ENCODE measurements at regions of chr17 and their contacts with region 1.

Region 1: DNA sequence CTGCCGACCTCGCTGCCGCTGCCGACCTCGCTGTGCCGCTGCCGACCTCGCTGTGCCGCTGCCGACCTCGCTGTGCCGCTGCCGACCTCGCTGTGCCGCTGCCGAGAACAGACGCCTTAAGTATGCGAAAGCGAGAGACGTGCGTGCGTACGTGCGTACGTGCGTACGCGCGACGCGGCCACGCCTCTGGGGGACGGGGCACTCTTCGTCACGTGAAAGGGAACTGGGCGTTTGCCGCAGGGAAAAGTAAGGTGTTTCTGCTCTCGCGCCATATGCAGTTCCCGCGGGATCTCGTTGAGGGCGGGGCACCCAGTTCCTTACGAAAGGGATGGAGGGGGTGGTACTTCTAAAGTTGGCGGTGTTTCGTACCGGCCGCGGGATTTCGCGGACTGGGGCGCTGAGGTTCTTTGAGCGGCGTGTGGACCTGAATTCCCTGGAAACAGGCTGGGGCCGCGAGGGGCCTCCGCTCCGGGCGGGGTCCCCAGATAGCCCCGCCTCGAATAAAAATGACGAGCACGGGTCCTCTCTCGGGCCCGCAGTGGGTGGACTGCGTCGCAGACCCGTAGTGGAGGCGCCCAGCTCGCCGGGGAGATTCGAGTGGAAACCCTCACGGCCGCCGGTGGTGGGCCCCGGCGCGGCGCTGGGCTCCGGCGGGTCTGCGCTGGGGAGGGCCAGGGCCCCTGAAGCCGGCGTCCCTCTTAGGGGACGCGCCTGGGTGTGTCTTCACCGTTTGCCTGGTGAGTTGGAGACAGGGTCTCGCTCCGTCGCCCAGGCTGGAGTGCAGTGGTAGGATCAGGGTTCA is at the start of gene EIF4A3:
- DNase-seq: peak; percentile 100
- H3K4me3 ChIP-seq: peak within 1 kb of the TSS; percentile 61 to 81 (median 68)
- H3K27ac ChIP-seq: peak within 1 kb of the TSS; percentile 67
- H3K4me1 ChIP-seq: peaks cover 17% of the 10 kb centered on the region
- H3K27me3 ChIP-seq: no peaks in the 10 kb centered on the region
- CTCF ChIP-seq: no peak
- POLR2A ChIP-seq: peak; percentile 75
- total RNA-seq, gene EIF4A3: 90.4 and 93.8 TPM in 2 replicates

Region 2: GRCh38 chr17:80035943-80036714 is 111.1 kb before region 1 on chr17 and contains the start of gene CCDC40:
- CTCF ChIA-PET with region 1: no interaction called
- POLR2A ChIA-PET with region 1: no interaction called
- dilution Hi-C with region 1: no loop called
- intact Hi-C with region 1: loop called (anchors 1 kb)
- DNase-seq: peak; percentile 72
- H3K4me3 ChIP-seq: peak within 1 kb of the TSS; percentile 5 to 86 (median 76)
- H3K27ac ChIP-seq: peak within 1 kb of the TSS; percentile 71
- H3K4me1 ChIP-seq: peaks cover 7% of the 10 kb centered on the region
- H3K27me3 ChIP-seq: no peaks in the 10 kb centered on the region
- CTCF ChIP-seq: no peak
- POLR2A ChIP-seq: peak; percentile 63
- total RNA-seq, gene CCDC40: 4.1 and 5.5 TPM in 2 replicates

Region 3: DNA sequence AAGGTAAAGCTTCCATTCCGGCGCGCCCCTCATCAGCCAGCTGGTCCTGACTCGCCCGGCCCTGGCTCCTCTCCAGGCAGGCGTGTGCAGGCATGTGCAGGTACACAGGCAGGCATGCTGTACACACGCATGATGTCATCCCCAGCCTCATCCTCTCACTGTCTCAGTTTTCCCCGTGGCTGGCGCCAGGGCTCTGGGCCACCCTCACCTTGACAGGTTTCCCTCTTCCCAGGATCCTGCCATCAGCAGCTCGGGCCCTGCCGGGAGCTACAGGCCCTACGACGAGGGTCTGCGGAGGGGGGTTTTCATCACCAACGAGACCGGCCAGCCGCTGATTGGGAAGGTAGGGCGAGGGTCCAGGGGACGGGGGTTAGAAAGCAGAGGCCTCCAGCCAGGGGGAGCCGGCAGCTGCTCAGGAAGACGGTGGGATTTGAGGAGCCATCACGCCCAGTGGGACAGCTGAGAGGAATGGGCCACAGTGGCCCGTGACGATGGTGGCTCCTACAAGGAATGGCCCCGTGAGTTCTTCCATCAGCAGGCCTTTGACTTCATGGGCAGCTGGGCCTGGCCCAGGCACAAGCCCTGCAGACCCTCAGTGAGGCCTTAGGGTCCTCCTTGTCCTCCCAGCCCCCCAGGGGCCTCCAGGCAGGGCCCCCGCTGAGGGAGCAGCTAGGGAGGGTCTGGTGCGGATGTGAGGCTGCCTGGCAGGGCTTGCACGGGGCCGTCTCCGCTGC is 37.4 kb before region 1 on chr17:
- CTCF ChIA-PET with region 1: no interaction called
- POLR2A ChIA-PET with region 1: no interaction called
- dilution Hi-C with region 1: no loop called
- intact Hi-C with region 1: no loop called
- DNase-seq: no peak
- H3K4me3 ChIP-seq: no peak overlapping the region
- H3K27ac ChIP-seq: no peak overlapping the region
- H3K4me1 ChIP-seq: no peaks in the 10 kb centered on the region
- H3K27me3 ChIP-seq: no peaks in the 10 kb centered on the region
- CTCF ChIP-seq: no peak
- POLR2A ChIP-seq: no peak

Region 4: DNA sequence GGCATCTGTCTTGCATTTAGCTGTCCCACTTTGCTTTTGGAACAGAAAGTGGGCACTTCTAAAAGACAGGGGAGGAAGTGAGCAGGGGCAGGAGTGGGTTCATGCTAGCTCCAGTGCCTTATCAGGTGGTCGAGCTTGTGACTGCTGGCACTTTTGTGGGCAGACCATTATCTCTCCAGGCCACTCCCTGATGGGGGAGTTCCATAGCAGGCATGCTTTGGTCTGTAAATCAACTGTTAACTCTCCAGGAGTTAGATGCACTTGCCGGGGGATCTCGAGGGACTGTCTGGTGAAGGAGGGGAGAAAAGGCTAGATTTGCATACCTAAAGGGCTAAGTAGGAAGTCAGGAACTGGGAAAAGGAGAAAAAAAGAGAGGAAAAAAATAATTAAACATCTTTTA is 13.3 kb after region 1 on chr17:
- CTCF ChIA-PET with region 1: no interaction called
- POLR2A ChIA-PET with region 1: no interaction called
- dilution Hi-C with region 1: no loop called
- intact Hi-C with region 1: no loop called
- DNase-seq: no peak
- H3K4me3 ChIP-seq: no peak overlapping the region
- H3K27ac ChIP-seq: no peak overlapping the region
- H3K4me1 ChIP-seq: no peaks in the 10 kb centered on the region
- H3K27me3 ChIP-seq: peaks cover 8% of the 10 kb centered on the region in 2 experiments
- CTCF ChIP-seq: no peak
- POLR2A ChIP-seq: no peak

Region 5: GRCh38 chr17:80177986-80178590 is 30.9 kb after region 1 on chr17:
- CTCF ChIA-PET with region 1: no interaction called
- POLR2A ChIA-PET with region 1: no interaction called
- dilution Hi-C with region 1: no loop called
- intact Hi-C with region 1: loop called (anchors 1 kb)
- DNase-seq: peak; percentile 39
- H3K4me3 ChIP-seq: no peak overlapping the region
- H3K27ac ChIP-seq: no peak overlapping the region
- H3K4me1 ChIP-seq: peaks cover 7% of the 10 kb centered on the region
- H3K27me3 ChIP-seq: peaks cover 13 to 18% of the 10 kb centered on the region in 2 experiments
- CTCF ChIP-seq: no peak
- POLR2A ChIP-seq: no peak

Region 6: GRCh38 chr17:80219013-80219762 is 72.0 kb after region 1 on chr17:
- CTCF ChIA-PET with region 1: no interaction called
- POLR2A ChIA-PET with region 1: no interaction called
- dilution Hi-C with region 1: no loop called
- intact Hi-C with region 1: loop called (anchors 1 kb)
- DNase-seq: peak; percentile 55
- H3K4me3 ChIP-seq: peak overlapping the region; percentile 17 to 83 (median 65)
- H3K27ac ChIP-seq: peak overlapping the region; percentile 37
- H3K4me1 ChIP-seq: peaks cover 13% of the 10 kb centered on the region
- H3K27me3 ChIP-seq: no peaks in the 10 kb centered on the region
- CTCF ChIP-seq: no peak
- POLR2A ChIP-seq: no peak

Region 7: DNA sequence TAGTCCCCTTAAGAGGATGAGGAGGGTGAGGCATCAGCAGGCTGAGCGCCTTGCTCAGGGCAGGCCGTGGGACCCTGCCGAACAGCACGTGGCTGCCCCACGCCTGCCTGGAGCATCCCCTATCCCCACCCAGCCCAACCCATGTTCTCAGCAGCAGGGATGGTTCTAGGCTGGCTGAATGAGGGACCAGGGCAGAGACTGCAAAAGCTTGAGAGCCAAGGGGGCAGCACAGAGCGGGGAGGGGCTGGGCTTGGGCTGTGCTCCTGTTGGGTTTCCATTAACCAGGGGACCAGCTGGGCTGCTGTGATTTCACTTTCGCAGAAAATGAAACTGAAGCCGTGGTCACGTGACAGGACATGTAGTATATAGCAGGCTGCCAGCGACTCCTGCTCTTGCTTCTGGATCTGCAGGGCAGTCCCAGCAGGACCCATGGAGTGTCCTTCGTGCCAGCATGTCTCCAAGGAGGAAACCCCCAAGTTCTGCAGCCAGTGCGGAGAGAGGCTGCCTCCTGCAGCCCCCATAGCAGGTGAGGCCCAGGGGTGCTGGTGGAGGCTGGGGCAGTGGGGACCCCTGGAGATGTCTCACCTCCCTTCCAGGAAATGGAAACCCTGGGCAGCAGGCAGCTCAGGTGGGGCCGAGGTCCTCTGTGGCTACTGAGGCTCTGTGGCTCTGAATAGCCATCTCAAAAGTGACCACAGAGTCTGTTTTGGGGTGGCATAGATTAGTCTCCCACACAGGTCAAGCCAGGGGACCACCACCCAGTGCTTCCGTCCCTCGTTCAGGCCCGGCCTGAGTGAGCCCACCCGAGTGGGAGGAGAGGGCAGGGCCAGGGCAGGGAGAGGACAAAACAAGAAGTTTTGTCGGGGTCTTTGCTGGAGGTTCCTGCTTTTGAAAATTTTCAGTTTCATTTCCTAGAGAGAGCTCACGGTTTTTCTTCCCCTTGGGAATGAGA is 116.3 kb after region 1 on chr17:
- CTCF ChIA-PET with region 1: interaction called, 3 read pairs
- POLR2A ChIA-PET with region 1: no interaction called
- dilution Hi-C with region 1: no loop called
- intact Hi-C with region 1: loop called (anchors 5 kb)
- DNase-seq: peak; percentile 86
- H3K4me3 ChIP-seq: peak overlapping the region in 2 of 3 experiments; percentile 1 to 12
- H3K27ac ChIP-seq: no peak overlapping the region
- H3K4me1 ChIP-seq: peaks cover 30% of the 10 kb centered on the region
- H3K27me3 ChIP-seq: no peaks in the 10 kb centered on the region
- CTCF ChIP-seq: peak in 1 of 2 donors; percentile 18
- POLR2A ChIP-seq: peak; percentile 77

Region 8: DNA sequence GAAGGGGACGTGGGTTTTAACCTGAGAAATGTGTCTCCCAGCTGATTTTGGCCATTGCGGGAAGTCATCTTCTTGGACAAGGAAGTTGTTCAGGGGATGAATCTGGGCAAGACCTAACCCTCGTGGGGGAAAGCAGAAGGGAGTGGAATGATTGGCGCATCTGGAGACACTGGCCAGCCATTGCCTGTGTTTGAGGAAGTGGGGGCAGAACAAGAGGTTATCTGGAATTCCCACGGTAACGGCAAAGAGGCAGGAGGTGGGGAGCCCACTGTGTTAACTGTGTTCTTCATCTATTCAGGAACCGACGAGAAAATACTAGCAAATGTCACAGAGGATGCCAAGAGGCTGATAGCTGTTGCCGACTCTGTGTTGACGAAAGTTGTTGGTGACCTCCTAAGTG is 180.3 kb after region 1 on chr17:
- CTCF ChIA-PET with region 1: no interaction called
- POLR2A ChIA-PET with region 1: no interaction called
- dilution Hi-C with region 1: no loop called
- intact Hi-C with region 1: no loop called
- DNase-seq: peak; percentile 51
- H3K4me3 ChIP-seq: no peak overlapping the region
- H3K27ac ChIP-seq: no peak overlapping the region
- H3K4me1 ChIP-seq: peaks cover 13% of the 10 kb centered on the region
- H3K27me3 ChIP-seq: no peaks in the 10 kb centered on the region
- CTCF ChIP-seq: no peak
- POLR2A ChIP-seq: no peak

Measured in endothelial cell of umbilical vein (primary cell).